Left ventricle myocardium inferior (tissue), 1 donor: ENCODE measurements at regions of chr7 and their contacts with region 1.

Region 1: GRCh38 chr7:22110227-22110839 is 164.6 kb upstream of the CDCA7L start:
- DNase-seq: peak; percentile 31
- H3K4me3 ChIP-seq: no peak overlapping the region
- H3K27ac ChIP-seq: peak overlapping the region; percentile 10
- H3K4me1 ChIP-seq: peaks cover 18% of the 10 kb centered on the region
- H3K27me3 ChIP-seq: no peaks in the 10 kb centered on the region
- CTCF ChIP-seq: peak; percentile 81

Region 2: GRCh38 chr7:21624320-21624719 is 486.0 kb before region 1 on chr7:
- intact Hi-C with region 1: no loop called
- DNase-seq: no peak
- H3K4me3 ChIP-seq: no peak overlapping the region
- H3K27ac ChIP-seq: no peak overlapping the region
- H3K4me1 ChIP-seq: no peaks in the 10 kb centered on the region
- H3K27me3 ChIP-seq: no peaks in the 10 kb centered on the region
- CTCF ChIP-seq: no peak

Region 3: DNA sequence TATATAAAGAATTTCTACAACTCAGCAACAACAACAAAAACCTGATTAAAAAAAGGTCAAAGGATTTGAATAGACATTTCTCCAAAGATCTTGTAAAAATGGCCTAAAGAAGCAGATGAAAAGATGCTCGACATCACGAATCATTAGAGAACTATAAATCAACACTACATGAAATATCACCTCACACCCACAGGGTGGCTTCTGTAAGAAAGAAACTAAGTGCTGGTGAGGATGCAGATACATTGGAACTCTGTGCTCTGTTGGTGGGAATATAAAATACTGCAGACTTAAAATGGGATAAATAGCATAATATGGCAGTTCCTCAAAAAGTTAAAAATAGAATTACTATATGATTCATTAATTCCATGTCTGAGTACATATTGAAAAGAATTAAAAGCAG is 126.3 kb before region 1 on chr7:
- intact Hi-C with region 1: no loop called
- DNase-seq: no peak
- H3K4me3 ChIP-seq: no peak overlapping the region
- H3K27ac ChIP-seq: no peak overlapping the region
- H3K4me1 ChIP-seq: no peaks in the 10 kb centered on the region
- H3K27me3 ChIP-seq: no peaks in the 10 kb centered on the region
- CTCF ChIP-seq: peak; percentile 17

Region 4: DNA sequence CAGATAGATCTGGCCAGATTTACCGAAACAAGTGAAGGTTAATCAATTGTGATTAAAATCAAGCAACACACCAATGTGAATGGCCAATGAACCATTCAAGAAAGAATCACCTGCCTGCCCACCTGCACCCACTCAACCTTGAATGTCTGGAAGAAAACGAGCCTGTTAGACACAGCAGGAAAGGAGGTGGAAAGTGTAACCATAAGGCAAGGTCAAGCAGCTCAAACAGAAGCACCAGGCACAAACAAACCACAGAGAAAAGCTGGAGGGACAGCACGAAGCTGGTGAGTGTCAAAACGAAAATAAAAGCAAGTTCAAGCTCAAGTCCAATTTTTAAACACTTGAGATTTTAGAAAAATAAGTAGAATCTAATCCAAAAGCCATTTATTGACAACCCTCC is 324.8 kb after region 1 on chr7:
- intact Hi-C with region 1: no loop called
- DNase-seq: no peak
- H3K4me3 ChIP-seq: no peak overlapping the region
- H3K27ac ChIP-seq: no peak overlapping the region
- H3K4me1 ChIP-seq: peaks cover 5% of the 10 kb centered on the region
- H3K27me3 ChIP-seq: no peaks in the 10 kb centered on the region
- CTCF ChIP-seq: no peak

Region 5: GRCh38 chr7:22488643-22489462 is 378.5 kb after region 1 on chr7:
- intact Hi-C with region 1: loop called (anchors 2 kb)
- DNase-seq: peak; percentile 33
- H3K4me3 ChIP-seq: no peak overlapping the region
- H3K27ac ChIP-seq: no peak overlapping the region
- H3K4me1 ChIP-seq: peaks cover 7% of the 10 kb centered on the region
- H3K27me3 ChIP-seq: no peaks in the 10 kb centered on the region
- CTCF ChIP-seq: peak; percentile 93